Heart right ventricle (tissue), 16 donors: ENCODE measurements at regions of chr1 and their contacts with region 1.

Region 1: DNA sequence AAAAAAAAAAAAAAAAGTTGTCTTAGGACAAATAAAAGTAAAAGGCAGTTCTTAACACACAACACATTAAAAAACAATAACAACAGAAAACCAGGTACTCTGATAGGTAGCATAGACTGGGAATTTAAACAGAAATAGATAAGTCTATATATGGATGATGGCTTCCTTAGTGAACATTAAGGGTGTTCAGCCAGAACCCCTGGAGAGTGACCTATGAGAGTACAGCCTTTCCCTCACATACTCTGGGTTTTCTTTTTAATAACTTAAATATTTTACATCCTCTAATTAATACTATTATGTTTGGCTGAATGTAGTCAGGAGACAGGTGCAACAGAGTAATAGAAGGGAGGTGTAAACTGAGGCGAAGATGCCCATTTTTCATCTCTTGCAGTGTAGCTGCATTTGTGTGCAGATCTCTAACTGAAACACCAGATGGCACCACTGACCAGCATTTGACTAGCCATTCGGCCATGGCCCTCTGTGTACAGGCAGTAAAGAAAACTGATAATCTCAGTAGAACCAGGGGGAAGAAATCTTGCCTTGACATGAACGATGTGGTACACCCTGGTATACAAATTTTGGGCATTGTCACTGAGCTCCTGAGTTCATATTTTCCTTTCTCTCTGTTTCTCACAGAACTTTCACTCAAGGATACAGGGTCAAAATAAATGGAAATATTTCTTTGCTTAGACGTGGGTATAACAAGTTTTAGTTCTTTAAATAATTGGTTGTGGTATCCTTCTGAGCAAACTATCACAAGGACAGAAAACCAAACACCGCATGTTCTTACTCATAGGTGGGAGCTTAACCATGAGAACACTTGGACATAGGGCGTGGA is 7.6 kb downstream of the TTF2 start:
- DNase-seq: peak in 1 of 2 donors; percentile 44
- ATAC-seq: peak; percentile 84 to 92 (median 88)
- H3K4me3 ChIP-seq: no peak overlapping the region
- H3K27ac ChIP-seq: no peak overlapping the region
- H3K4me1 ChIP-seq: no peaks in the 10 kb centered on the region
- H3K27me3 ChIP-seq: no peaks in the 10 kb centered on the region
- CTCF ChIP-seq: peak; percentile 47 to 86 (median 80)

Region 2: DNA sequence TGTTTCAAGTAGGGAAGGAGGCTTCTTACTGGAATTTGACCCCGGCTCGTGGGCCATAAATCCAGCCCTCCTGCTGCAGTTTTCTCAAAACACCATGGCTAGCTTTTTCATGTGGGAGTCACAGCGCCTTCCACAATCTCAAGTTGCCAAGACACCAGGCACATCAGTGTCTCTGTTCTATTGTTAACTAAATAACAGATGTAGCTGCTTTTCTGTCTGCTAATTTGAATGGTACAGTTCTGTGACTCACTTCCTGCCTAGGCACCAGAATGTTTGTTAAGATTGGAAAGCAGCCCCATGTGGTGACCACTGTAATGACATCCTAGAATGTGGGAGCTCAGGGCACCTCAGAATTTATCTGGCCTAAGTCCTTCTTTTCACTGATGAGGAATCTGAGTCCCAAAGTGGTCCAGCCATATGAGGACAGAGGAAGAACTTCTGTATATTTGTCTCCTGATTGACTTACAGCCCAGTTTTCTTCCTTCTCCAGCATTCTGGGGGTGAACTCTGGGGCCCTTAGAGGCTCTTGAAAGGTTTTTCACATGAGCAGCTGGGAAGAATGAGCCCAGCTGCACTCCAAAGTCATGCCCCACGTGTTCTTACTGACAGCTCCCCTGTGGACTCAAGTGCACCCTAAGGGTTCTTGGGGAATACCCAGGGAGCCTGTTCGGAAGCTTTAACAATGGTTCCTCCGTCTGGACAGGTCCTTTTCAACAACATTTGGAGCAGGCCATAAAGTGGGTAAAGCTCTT is 26.3 kb after region 1 on chr1:
- intact Hi-C with region 1: no loop called
- DNase-seq: no peak
- ATAC-seq: peak in 2 of 8 donors; percentile 41 to 58
- H3K4me3 ChIP-seq: no peak overlapping the region
- H3K27ac ChIP-seq: peak overlapping the region in 4 of 10 donors; percentile 2 to 56 (median 14)
- H3K4me1 ChIP-seq: peaks cover 0 to 29% (median 22%) of the 10 kb centered on the region in 9 donors
- H3K27me3 ChIP-seq: no peaks in the 10 kb centered on the region
- CTCF ChIP-seq: peak in 5 of 9 donors; percentile 4 to 37 (median 23)

Region 3: DNA sequence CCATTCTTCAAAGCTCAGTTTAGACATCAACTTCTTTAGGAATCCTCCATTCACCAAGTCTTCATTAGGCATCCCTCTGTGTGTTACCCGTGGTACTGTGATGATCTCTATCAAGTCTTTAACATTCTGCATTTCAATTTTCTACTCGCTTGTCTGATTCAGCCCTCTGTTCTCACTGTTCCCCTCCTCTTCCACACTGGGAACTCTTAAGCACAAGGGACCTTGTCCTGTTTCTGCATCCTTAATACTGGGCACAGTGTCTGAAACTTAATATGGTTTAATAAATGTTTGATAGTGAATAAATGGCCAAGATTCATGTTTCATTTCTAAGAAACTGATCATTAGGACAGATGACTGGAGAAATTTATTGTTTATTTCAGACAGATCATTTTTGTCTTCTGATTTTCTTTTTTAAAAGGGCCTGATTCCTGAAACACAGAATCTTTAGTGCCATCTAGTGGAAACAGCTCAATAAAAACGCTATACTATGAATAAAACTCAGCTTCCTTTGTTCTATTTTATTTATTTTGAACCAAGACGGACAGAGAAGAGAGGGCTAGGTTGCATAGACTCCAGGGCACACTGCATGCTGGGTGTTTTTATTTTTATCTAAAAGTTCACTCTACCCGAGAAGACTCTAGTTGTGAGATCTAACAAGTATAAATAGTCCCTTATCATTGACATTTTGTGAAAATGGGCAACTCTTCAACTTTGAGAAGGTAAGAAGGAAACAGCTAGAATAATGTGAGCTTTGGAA is 60.7 kb after region 1 on chr1:
- intact Hi-C with region 1: loop called in 9 of 10 experiments (anchors 2 to 10 kb)
- DNase-seq: no peak
- ATAC-seq: peak in 7 of 8 donors; percentile 57 to 85 (median 79)
- H3K4me3 ChIP-seq: peak overlapping the region in 6 of 10 donors; percentile 1 to 29 (median 11)
- H3K27ac ChIP-seq: peak overlapping the region; percentile 16 to 78 (median 64)
- H3K4me1 ChIP-seq: peaks cover 0 to 40% (median 10%) of the 10 kb centered on the region in 9 donors
- H3K27me3 ChIP-seq: no peaks in the 10 kb centered on the region
- CTCF ChIP-seq: peak; percentile 18 to 66 (median 50)

Region 4: DNA sequence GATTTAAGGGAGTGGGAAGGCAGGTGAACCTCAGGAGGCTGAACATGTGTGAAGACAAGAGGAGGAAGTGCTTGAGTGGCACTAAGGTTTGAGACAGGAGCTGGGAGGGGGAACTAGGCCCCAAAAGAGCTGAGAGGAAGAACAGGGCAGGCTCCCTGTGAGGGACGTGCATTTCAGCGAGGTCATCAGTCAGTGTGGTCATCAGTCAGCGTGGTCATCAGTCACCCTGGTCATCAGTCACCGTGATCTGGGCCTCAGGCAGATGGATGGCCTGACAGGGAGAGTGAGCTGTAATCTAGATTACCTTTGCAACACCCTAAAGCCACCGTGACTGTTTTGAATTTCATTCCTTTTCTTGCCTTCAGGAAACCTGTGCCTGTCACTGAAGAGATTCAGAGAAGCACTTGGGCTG is 113.9 kb after region 1 on chr1:
- intact Hi-C with region 1: no loop called
- DNase-seq: no peak
- ATAC-seq: no peak
- H3K4me3 ChIP-seq: no peak overlapping the region
- H3K27ac ChIP-seq: no peak overlapping the region
- H3K4me1 ChIP-seq: no peaks in the 10 kb centered on the region
- H3K27me3 ChIP-seq: no peaks in the 10 kb centered on the region
- CTCF ChIP-seq: no peak

Region 5: GRCh38 chr1:117284399-117285215 is 216.9 kb after region 1 on chr1:
- intact Hi-C with region 1: loop called (anchors 1 to 5 kb)
- DNase-seq: no peak
- ATAC-seq: peak in 7 of 8 donors; percentile 47 to 78 (median 71)
- H3K4me3 ChIP-seq: no peak overlapping the region
- H3K27ac ChIP-seq: no peak overlapping the region
- H3K4me1 ChIP-seq: no peaks in the 10 kb centered on the region
- H3K27me3 ChIP-seq: peaks cover 0 to 5% (median 0%) of the 10 kb centered on the region in 7 donors
- CTCF ChIP-seq: peak; percentile 9 to 76 (median 55)

Region 6: GRCh38 chr1:118039170-118039569 is 971.4 kb after region 1 on chr1:
- intact Hi-C with region 1: no loop called
- DNase-seq: no peak
- ATAC-seq: no peak
- H3K4me3 ChIP-seq: no peak overlapping the region
- H3K27ac ChIP-seq: no peak overlapping the region
- H3K4me1 ChIP-seq: peaks cover 0 to 13% (median 0%) of the 10 kb centered on the region in 9 donors
- H3K27me3 ChIP-seq: peaks cover 0 to 4% (median 0%) of the 10 kb centered on the region in 7 donors
- CTCF ChIP-seq: no peak